HCT116 (cell line): ENCODE measurements at regions of chr2 and their contacts with region 1.

Region 1: GRCh38 chr2:237858294-237859081 is 935 bp upstream of the RAMP1 start:
- DNase-seq: no peak
- ATAC-seq: peak; percentile 86
- H3K4me3 ChIP-seq: peak overlapping the region; percentile 53 to 71
- H3K27ac ChIP-seq: peak overlapping the region; percentile 90
- H3K4me1 ChIP-seq: peaks cover 30 to 48% of the 10 kb centered on the region in 2 experiments
- H3K27me3 ChIP-seq: no peaks in the 10 kb centered on the region
- CTCF ChIP-seq: peak in 2 of 3 experiments; percentile 90; a peak in 4 of 6 replicates
- POLR2A ChIP-seq: no peak
- RAD21 ChIP-seq: no peak

Region 2: DNA sequence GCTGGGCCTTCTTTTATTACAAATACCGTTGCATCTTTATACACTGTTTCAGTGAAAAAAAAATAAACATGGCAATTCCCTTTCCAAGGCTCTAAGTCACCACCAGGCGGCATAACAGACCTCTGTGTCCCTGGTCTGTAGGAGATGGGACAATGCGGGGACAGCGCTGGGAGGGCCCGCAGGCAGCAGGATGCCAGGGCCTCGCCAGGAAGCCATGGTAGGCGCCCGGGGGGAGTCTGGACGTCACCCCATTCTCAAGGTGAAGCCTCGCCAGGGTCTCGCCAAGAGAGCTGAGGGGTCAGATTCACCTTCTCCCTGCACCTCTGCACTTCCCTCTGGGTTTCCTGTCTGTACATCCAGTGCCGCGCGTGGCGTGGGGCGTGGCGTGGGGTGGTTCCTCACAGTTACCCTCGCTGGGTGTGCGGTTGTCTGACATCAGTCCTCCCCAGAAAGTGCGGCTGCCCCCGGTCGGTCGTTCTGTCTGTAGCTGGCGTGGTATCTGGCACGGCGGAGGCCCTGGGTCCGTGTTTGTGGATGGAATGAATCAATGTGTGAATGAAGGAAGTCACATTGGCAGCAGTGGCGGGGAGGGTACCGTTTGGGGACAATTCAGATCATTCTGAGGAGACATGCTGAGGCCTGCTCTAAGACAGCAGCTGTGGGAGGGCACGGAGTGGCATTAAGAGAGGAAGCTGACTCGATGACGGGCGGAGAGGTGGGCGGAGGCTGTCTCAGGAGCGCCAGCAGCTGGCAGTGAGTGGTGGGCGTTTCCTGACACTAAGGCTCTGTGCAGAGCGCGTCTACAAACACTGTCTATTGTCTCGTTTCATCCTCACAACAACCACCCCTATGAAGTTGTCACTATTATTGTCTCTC is 185.1 kb before region 1 on chr2:
- CTCF ChIA-PET with region 1: no interaction called
- POLR2A ChIA-PET with region 1: no interaction called
- RAD21 ChIA-PET with region 1: no interaction called
- intact Hi-C with region 1: no loop called
- DNase-seq: peak; percentile 75
- ATAC-seq: peak; percentile 93
- H3K4me3 ChIP-seq: peak overlapping the region; percentile 52 to 64
- H3K27ac ChIP-seq: no peak overlapping the region; the same call in 1 of the 2 replicates
- H3K4me1 ChIP-seq: peaks cover 5 to 21% of the 10 kb centered on the region in 2 experiments
- H3K27me3 ChIP-seq: peaks cover 5% of the 10 kb centered on the region; the same call in 1 of the 2 replicates
- CTCF ChIP-seq: peak; percentile 74 to 95 (median 83)
- POLR2A ChIP-seq: no peak
- RAD21 ChIP-seq: peak; percentile 97

Region 3: DNA sequence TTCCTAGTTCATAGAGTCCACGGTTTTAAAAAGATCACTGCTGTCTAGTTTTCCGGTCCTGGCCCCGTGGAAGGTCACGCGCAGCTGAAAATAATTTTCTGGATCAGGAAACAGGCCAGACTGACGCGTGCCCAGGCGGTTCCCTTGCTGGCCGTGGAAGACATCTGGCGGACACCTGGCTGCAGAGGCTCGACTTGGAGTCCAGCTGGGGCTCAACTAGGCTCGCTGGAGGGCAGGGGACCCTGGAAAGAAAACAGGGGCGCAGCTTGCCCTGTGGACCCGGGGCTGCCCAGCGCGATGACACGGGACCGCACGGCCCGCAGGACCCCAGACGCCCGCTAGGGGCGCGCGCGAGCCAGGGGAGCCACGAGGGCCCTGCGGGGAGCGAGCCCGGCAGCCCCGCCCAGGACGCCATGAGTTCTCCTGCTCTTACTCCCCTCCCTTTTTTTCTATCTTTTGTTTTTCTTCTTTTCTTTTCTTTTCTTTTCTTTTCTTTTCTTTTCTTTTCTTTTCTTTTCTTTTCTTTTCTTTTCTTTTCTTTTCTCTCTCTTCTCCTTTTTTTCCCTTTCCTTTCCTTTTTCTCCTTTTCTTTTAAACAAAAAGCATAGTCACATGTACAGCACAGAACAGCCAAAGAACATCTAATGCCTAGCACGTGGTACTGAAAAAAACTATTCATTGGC is 65.1 kb after region 1 on chr2:
- CTCF ChIA-PET with region 1: interaction called, 7 read pairs
- POLR2A ChIA-PET with region 1: no interaction called
- RAD21 ChIA-PET with region 1: interaction called in 1 of 2 experiments, 4 read pairs
- intact Hi-C with region 1: loop called (anchors 5 kb)
- DNase-seq: peak; percentile 29
- ATAC-seq: peak; percentile 91
- H3K4me3 ChIP-seq: peak overlapping the region; percentile 35 to 45
- H3K27ac ChIP-seq: peak overlapping the region; percentile 51; the same call in 1 of the 2 replicates
- H3K4me1 ChIP-seq: peaks cover 13 to 23% of the 10 kb centered on the region in 2 experiments
- H3K27me3 ChIP-seq: no peaks in the 10 kb centered on the region
- CTCF ChIP-seq: peak; percentile 69 to 99 (median 93)
- POLR2A ChIP-seq: no peak
- RAD21 ChIP-seq: peak; percentile 73

Region 4: DNA sequence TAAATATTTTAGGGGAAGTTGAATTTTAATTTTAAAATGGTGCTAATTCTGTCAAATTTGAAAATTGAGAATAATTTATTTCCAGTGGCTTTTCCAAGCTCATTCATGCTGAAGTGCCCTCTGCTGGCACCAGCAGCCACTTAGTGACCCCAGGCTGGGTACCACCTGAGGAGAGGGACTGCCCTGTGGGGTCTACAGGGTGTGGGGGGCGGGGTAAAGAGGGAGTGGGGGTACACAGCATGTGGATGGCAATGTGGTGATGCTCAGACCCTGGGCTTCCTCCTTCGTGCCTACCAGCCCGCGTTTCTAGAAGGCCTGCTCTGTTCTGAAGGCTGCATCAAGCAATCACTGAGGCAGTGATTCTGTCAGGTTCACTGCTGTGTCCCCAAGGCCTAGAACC is 157.2 kb after region 1 on chr2:
- CTCF ChIA-PET with region 1: interaction called, 15 read pairs
- POLR2A ChIA-PET with region 1: no interaction called
- RAD21 ChIA-PET with region 1: interaction called in 1 of 2 experiments, 3 read pairs
- intact Hi-C with region 1: loop called (anchors 1 kb)
- DNase-seq: no peak
- ATAC-seq: no peak
- H3K4me3 ChIP-seq: no peak overlapping the region
- H3K27ac ChIP-seq: no peak overlapping the region
- H3K4me1 ChIP-seq: no peaks in the 10 kb centered on the region
- H3K27me3 ChIP-seq: no peaks in the 10 kb centered on the region
- CTCF ChIP-seq: peak; percentile 42 to 57 (median 53); a peak in 5 of 6 replicates
- POLR2A ChIP-seq: no peak
- RAD21 ChIP-seq: peak; percentile 52

Region 5: GRCh38 chr2:238060542-238061314 is 202.2 kb after region 1 on chr2 and contains the start of gene SCLY:
- CTCF ChIA-PET with region 1: no interaction called
- POLR2A ChIA-PET with region 1: no interaction called
- RAD21 ChIA-PET with region 1: no interaction called
- intact Hi-C with region 1: loop called (anchors 1 kb)
- DNase-seq: peak; percentile 91
- ATAC-seq: peak; percentile 94
- H3K4me3 ChIP-seq: peak within 1 kb of the TSS; percentile 78 to 95
- H3K27ac ChIP-seq: peak within 1 kb of the TSS; percentile 94
- H3K4me1 ChIP-seq: peaks cover 9 to 22% of the 10 kb centered on the region in 2 experiments; a peak in 2 of 4 replicates
- H3K27me3 ChIP-seq: no peaks in the 10 kb centered on the region
- CTCF ChIP-seq: no peak
- POLR2A ChIP-seq: peak; percentile 40
- RAD21 ChIP-seq: no peak
- total RNA-seq, gene SCLY: 28.7 TPM

Region 6: DNA sequence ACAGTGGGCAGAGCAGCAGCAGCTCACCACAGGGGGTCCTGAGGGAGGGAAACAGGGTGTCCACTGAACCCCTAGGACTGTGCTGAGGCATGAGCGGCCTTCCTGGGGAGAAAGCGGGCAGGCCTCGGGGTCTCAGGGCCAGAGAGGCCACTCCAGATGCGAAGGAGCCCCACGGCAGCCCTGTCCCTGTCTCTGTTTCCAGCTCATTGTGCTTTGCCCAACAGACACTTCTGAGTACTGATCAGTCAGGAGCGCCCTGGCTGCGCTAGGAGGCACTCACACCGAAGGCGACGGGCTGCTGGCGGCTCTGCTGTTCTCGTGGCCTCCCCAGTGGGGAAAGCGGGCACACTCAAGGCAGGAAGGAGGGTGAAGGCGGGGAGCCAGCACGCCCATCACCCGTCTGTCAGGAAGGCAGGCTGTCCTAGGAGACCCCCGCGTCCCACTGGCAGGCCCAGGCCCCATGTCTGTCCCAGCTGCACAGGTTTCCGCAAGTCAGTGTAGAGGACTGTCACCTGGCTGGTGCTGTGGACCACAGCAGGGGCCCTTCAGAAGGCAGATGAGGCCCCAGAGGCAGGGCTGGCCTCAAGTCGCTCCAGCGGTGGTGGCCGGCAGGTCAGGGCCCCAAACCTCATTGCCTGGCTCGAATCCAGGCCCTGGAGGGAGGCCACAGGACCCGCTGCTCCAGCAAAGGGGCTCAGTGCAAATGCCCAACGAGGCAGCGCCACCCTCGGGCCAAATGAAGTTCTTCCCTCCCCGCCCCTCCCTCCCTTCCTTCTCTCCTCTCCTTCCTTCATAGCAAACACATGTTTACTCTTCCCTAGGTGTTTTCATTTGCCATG is 248.4 kb after region 1 on chr2:
- CTCF ChIA-PET with region 1: interaction called, 4 read pairs
- POLR2A ChIA-PET with region 1: no interaction called
- RAD21 ChIA-PET with region 1: no interaction called
- intact Hi-C with region 1: loop called (anchors 1 kb)
- DNase-seq: no peak
- ATAC-seq: peak; percentile 63
- H3K4me3 ChIP-seq: no peak overlapping the region
- H3K27ac ChIP-seq: no peak overlapping the region; the same call in 1 of the 2 replicates
- H3K4me1 ChIP-seq: peaks cover 0 to 3% of the 10 kb centered on the region in 2 experiments; a peak in 1 of 4 replicates
- H3K27me3 ChIP-seq: no peaks in the 10 kb centered on the region
- CTCF ChIP-seq: peak; percentile 28 to 48 (median 47); a peak in 5 of 6 replicates
- POLR2A ChIP-seq: no peak
- RAD21 ChIP-seq: peak; percentile 74

Region 7: DNA sequence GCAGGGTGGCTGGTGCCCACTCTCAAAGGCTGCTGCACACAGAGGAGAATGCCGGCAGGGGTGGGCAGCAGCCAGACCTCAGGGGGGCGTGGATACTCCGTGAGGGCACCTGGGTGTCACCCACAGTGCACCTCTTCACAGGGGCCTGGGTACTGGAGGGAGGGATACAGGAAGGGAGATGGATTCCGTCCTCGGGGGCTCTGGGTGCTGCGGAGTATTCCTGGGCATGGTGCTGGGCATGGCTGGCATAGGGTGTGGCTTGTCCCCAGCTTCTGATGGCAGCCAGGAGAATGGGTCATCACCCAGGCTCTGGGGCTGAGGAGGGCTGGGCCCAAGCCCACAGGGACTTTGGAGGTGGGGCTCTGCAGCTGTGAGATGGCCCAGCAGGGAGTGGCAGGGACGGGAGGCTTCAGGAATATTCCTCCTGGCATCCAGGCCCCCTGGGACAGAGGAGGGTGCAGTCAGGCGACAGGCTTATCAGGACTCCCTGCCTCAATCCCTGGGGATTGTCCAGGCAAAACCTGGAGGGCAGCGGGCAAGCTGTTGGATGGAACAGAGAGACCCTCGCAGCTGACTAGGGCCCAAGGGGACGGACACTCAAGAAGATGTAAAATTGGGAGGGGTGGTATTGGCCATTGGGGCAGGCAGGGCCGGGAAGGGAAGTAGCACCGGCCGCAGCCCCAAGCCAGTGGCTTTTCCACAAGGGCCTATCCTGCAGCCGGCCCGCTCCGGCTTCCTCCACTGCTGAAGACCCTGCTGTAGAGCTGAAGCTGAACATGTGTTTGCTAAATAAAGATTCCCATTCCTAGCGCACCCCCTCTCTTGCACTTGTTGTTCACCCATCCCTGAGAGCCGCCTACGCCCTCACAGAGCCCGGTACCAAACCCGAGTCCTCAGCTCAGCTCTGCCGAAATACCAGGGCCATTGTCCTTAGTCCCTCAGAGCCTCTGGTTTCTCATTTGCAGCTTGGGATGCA is 274.3 kb after region 1 on chr2:
- CTCF ChIA-PET with region 1: no interaction called
- POLR2A ChIA-PET with region 1: no interaction called
- RAD21 ChIA-PET with region 1: no interaction called
- intact Hi-C with region 1: no loop called
- DNase-seq: no peak
- ATAC-seq: no peak
- H3K4me3 ChIP-seq: no peak overlapping the region
- H3K27ac ChIP-seq: no peak overlapping the region; the same call in 1 of the 2 replicates
- H3K4me1 ChIP-seq: 0 out of 4 replicates have a peak, but pooled peaks cover 0 to under 1% of the 10 kb centered on the region in 2 experiments
- H3K27me3 ChIP-seq: no peaks in the 10 kb centered on the region
- CTCF ChIP-seq: no peak
- POLR2A ChIP-seq: no peak
- RAD21 ChIP-seq: no peak

Region 8: DNA sequence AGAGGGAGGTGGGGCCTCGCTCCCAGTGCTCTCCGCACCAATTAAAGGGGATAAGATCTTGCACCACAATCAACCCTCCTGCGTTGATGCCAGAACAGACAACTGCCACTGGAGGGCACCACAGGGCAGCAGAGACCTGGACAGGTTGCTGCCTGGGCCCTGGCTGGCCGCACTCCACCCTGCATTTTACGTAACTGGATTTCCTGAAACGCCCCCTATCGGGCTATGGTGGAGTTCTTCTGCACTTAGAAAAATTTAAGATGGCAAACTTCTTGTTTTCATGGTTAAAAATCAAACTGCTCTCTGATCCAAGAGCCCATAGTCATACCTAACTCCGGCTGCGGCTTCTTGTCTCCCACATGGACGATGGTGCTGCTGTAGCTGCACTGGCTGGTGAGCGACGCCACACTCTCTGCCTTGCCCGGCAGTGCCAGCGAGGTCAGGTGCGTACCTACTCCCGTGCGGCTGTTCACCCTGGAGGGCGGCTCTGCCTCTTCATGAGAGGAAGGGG is 398.2 kb after region 1 on chr2:
- CTCF ChIA-PET with region 1: interaction called, 7 read pairs
- POLR2A ChIA-PET with region 1: no interaction called
- RAD21 ChIA-PET with region 1: no interaction called
- intact Hi-C with region 1: loop called (anchors 2 kb)
- DNase-seq: peak; percentile 92
- ATAC-seq: peak; percentile 98
- H3K4me3 ChIP-seq: no peak overlapping the region
- H3K27ac ChIP-seq: no peak overlapping the region
- H3K4me1 ChIP-seq: no peaks in the 10 kb centered on the region
- H3K27me3 ChIP-seq: no peaks in the 10 kb centered on the region
- CTCF ChIP-seq: peak; percentile 97 to 99 (median 98)
- POLR2A ChIP-seq: no peak
- RAD21 ChIP-seq: peak; percentile 92

Region 9: GRCh38 chr2:238263204-238264071 is 404.9 kb after region 1 on chr2:
- CTCF ChIA-PET with region 1: interaction called, 17 read pairs
- POLR2A ChIA-PET with region 1: no interaction called
- RAD21 ChIA-PET with region 1: interaction called, 3 to 5 read pairs
- intact Hi-C with region 1: no loop called
- DNase-seq: peak; percentile 73
- ATAC-seq: peak; percentile 83
- H3K4me3 ChIP-seq: no peak overlapping the region
- H3K27ac ChIP-seq: peak overlapping the region; percentile 20
- H3K4me1 ChIP-seq: peaks cover 3 to 13% of the 10 kb centered on the region in 2 experiments; a peak in 3 of 4 replicates
- H3K27me3 ChIP-seq: no peaks in the 10 kb centered on the region
- CTCF ChIP-seq: peak; percentile 68 to 83 (median 71)
- POLR2A ChIP-seq: no peak
- RAD21 ChIP-seq: peak; percentile 82